ENCODE measurements at regions of chr2 and their contacts with region 1.

Region 1: DNA sequence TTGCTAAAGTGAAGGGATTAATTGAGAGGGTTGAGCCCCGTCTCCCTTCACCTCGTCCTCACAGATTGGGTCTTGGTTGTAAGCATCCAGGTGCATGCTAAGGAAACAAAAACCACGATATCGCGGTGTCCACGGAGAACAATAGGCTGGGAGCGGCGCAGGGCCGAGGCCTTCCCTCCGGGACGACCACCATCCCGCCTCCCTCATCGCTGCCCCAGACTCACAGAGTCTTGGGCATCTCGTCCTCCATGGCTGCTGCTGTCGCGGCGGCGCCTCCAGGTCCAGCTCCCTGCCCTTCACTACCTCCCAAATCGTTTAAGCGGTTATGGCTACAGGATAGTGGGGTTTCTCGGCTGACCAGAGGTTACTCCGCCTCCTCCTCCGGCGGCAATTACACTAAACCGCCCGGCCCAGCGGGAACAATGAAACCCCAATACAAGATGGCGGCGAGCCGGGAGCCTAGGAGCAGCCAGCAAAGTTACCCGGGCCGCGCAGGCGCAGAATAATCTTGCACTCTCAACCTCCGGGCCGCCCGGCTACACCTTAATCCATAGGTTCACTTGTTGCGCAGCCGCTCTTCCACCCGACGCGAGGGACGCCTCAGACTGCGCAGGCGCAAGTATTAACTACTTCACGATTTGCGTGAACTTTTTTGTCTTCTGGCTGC is at the start of gene TIA1:
- DNase-seq: peak; percentile 100
- ATAC-seq: peak; percentile 98
- H3K4me3 Mint-ChIP-seq: peak within 1 kb of the TSS; percentile 93
- H3K27ac Mint-ChIP-seq: peak within 1 kb of the TSS; percentile 97
- H3K4me1 Mint-ChIP-seq: peaks cover 26% of the 10 kb centered on the region
- H3K27me3 Mint-ChIP-seq: peaks cover 2% of the 10 kb centered on the region
- CTCF ChIP-seq: no peak
- total RNA-seq, gene TIA1: 81.8 to 93.8 TPM

Region 2: DNA sequence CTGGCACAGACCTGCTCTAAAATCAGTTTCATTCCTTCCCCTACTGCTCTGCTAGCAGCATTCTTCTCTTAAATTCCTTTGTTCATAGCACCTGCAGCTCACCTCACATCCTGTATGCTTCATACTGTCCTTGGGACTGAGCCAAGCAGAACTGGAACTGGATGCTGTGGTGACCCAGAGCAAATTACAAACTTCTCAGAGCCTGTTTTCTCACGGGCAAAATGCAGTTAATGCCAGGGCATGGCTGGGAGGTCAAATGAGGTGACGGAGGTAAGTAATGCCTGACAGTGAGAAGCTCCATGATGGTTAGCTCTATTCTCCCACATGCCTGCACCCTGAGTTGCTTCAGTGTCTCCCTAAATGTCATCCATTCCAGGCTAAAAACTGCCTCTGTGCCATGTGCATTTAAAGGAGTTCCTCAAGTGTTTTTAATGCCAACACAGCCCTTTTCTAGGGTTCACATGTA is 87.2 kb before region 1 on chr2:
- CTCF ChIA-PET with region 1: no interaction called
- POLR2A ChIA-PET with region 1: no interaction called
- intact Hi-C with region 1: no loop called
- DNase-seq: peak; percentile 11
- ATAC-seq: no peak
- H3K4me3 Mint-ChIP-seq: no peak overlapping the region
- H3K27ac Mint-ChIP-seq: peak overlapping the region; percentile 70
- H3K4me1 Mint-ChIP-seq: peaks cover 4% of the 10 kb centered on the region
- H3K27me3 Mint-ChIP-seq: no peaks in the 10 kb centered on the region
- CTCF ChIP-seq: no peak

Region 3: GRCh38 chr2:70190418-70191243 is 57.7 kb before region 1 on chr2 and contains the start of gene C2orf42:
- CTCF ChIA-PET with region 1: interaction called, 4 read pairs
- POLR2A ChIA-PET with region 1: interaction called, 6 read pairs
- intact Hi-C with region 1: loop called (anchors 2 kb)
- DNase-seq: peak; percentile 98
- ATAC-seq: peak; percentile 85
- H3K4me3 Mint-ChIP-seq: peak within 1 kb of the TSS; percentile 87
- H3K27ac Mint-ChIP-seq: peak within 1 kb of the TSS; percentile 99
- H3K4me1 Mint-ChIP-seq: peaks cover 19% of the 10 kb centered on the region
- H3K27me3 Mint-ChIP-seq: no peaks in the 10 kb centered on the region
- CTCF ChIP-seq: no peak
- total RNA-seq, gene C2orf42: 19.2 to 24.6 TPM

Region 4: DNA sequence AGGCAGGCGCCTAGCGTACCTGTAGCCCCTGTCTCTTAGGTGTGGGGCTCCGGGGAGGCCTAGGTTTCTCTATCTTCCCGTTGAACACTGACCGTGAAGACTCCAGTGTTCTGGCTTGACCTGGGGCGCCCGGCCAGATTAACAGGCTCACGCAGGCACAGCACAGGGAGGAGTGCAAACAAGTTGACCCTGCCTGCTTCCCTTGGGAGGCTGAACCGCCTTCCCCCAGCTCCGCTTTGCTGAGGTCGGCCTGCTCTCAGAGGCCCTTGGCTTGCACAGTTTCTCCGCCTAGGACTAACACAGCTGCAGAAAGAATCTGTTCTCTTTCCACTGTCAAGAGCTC is 10.2 kb after region 1 on chr2:
- CTCF ChIA-PET with region 1: interaction called, 6 read pairs
- POLR2A ChIA-PET with region 1: interaction called, 13 read pairs
- intact Hi-C with region 1: no loop called
- DNase-seq: no peak
- ATAC-seq: no peak
- H3K4me3 Mint-ChIP-seq: peak overlapping the region; percentile 77
- H3K27ac Mint-ChIP-seq: no peak overlapping the region
- H3K4me1 Mint-ChIP-seq: peaks cover 39% of the 10 kb centered on the region
- H3K27me3 Mint-ChIP-seq: no peaks in the 10 kb centered on the region
- CTCF ChIP-seq: no peak

Region 5: GRCh38 chr2:70270323-70270722 is 22.0 kb after region 1 on chr2:
- CTCF ChIA-PET with region 1: no interaction called
- POLR2A ChIA-PET with region 1: no interaction called
- intact Hi-C with region 1: no loop called
- DNase-seq: no peak
- ATAC-seq: no peak
- H3K4me3 Mint-ChIP-seq: no peak overlapping the region
- H3K27ac Mint-ChIP-seq: no peak overlapping the region
- H3K4me1 Mint-ChIP-seq: peaks cover 10% of the 10 kb centered on the region
- H3K27me3 Mint-ChIP-seq: no peaks in the 10 kb centered on the region
- CTCF ChIP-seq: no peak